ENCODE measurements at regions of chr4 and their contacts with region 1.

Region 1: GRCh38 chr4:26028793-26029567 is 115.0 kb downstream of the SMIM20 start:
- DNase-seq: no peak
- H3K4me3 ChIP-seq: no peak overlapping the region
- H3K27me3 ChIP-seq: no peaks in the 10 kb centered on the region
- CTCF ChIP-seq: peak; percentile 93

Region 2: DNA sequence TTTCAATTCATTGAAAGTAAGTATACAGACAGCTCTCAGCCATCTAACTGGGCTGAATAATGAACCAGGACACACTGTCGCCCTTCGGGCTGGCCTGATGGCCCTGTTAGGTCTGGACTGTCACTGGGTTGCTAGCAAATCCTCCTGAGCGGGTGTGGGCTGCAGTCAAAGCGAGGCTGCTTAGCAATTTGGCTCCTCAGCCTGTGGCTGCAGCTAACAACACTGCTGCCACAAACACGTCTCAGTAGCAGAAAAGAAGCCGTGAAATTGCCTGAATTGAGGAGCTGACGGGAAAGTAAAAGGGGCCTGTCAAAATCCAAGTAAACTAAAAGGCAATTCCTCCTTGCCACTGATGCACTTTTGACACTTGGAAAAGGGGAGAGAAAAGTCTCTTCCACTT is 42.2 kb before region 1 on chr4:
- CTCF ChIA-PET with region 1: interaction called, 31 read pairs
- POLR2A ChIA-PET with region 1: no interaction called
- DNase-seq: no peak
- H3K4me3 ChIP-seq: no peak overlapping the region
- H3K27me3 ChIP-seq: peaks cover 4% of the 10 kb centered on the region; the same call in 1 of the 2 replicates
- CTCF ChIP-seq: no peak

Region 3: DNA sequence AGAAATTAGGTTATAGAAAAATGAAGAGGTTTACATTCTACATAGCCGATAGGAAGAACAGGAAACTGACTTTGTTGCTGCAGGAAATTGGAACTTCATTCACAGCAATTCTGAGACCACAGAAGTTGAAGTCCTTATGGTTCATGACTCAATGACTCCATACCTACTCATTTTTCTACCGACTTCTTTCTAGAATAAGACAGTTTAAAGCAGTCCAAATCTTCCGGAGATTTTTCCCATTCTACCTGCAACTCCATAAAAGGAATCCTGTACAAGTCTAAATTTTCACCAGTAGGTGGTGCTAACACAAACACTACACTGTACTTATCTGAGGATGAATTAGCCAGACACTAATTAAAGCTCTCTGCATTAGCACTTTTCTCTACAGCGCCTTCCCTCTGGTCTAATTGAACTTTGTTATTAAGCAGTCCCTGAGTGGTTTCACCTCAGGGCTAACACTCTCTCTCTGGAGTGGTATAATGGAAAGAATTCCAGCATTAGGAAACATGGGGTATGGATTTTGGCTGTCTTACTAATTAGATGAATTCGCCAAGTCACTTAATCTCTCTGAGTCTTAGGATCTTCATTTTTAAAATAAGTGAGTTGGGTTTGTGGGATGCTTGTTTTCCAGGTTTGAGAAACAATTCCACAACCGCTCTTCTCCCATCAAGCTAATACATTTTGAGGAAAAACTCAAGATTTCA is 53.0 kb after region 1 on chr4:
- CTCF ChIA-PET with region 1: interaction called, 15 read pairs
- POLR2A ChIA-PET with region 1: no interaction called
- DNase-seq: no peak
- H3K4me3 ChIP-seq: no peak overlapping the region
- H3K27me3 ChIP-seq: peaks cover 29% of the 10 kb centered on the region
- CTCF ChIP-seq: peak; percentile 66

Region 4: GRCh38 chr4:26319467-26319948 is 290.5 kb after region 1 on chr4:
- CTCF ChIA-PET with region 1: interaction called, 6 read pairs
- POLR2A ChIA-PET with region 1: interaction called, 24 read pairs
- DNase-seq: peak; percentile 97
- H3K4me3 ChIP-seq: peak overlapping the region; percentile 92
- H3K27me3 ChIP-seq: no peaks in the 10 kb centered on the region
- CTCF ChIP-seq: peak; percentile 20; the same call in 1 of the 2 replicates

Region 5: DNA sequence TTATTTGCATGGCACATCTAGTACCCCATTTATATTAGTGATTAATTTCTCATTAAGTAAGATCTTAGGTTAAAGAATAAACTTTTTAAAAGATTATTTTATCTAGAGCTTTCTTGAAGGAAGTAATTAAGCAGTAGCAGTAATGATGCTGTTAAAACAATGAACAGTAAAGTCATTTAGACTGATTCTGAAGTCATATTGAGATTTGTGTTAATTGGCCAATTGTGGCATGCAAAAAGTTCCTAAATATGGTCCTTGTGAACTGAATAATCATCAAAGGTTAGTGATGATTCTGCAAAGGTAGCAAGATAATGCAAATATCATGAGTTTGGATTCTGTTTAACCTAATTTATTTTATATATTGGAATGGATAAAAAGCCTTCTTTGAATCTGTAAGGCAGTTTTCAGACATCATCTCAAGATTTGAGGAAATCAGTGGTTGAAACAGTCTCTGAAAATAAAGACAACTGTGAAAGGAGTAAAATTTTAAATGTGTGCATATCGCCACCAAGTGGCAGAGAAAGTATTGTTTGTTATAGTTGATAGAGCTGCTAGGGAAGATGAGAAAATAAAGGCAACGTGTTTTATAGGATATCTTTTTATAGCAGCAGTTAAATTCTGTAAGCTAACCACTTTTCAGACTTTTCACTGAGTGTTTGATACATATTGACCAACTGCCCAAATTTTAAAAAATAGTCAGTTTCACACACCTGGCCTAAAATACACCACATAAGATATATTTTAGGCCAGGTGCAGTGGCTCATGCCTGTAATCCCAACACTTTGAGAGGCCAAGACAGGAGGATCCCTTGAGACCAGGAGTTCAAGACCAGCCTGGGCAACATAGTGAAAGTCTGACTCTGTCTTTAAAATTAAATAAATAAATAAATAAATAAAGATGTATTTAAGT is 381.7 kb after region 1 on chr4:
- CTCF ChIA-PET with region 1: interaction called, 33 read pairs
- POLR2A ChIA-PET with region 1: no interaction called
- DNase-seq: peak; percentile 15
- H3K4me3 ChIP-seq: no peak overlapping the region
- H3K27me3 ChIP-seq: no peaks in the 10 kb centered on the region
- CTCF ChIP-seq: peak; percentile 54

Region 6: GRCh38 chr4:27068151-27068867 is 1039.3 kb after region 1 on chr4:
- CTCF ChIA-PET with region 1: no interaction called
- POLR2A ChIA-PET with region 1: no interaction called
- DNase-seq: no peak
- H3K4me3 ChIP-seq: no peak overlapping the region
- H3K27me3 ChIP-seq: no peaks in the 10 kb centered on the region
- CTCF ChIP-seq: no peak

Measured in BJ (cell line).